ENCODE measurements at regions of chr11 and their contacts with region 1.

Region 1: GRCh38 chr11:59283825-59284772 is 71.4 kb upstream of the MPEG1 start:
- DNase-seq: peak; percentile 37 to 62
- H3K4me3 ChIP-seq: no peak overlapping the region
- H3K27ac ChIP-seq: no peak overlapping the region
- H3K4me1 ChIP-seq: no peaks in the 10 kb centered on the region
- H3K27me3 ChIP-seq: no peaks in the 10 kb centered on the region
- CTCF ChIP-seq: peak; percentile 87

Region 2: GRCh38 chr11:59207988-59208451 is 76.1 kb before region 1 on chr11:
- CTCF ChIA-PET with region 1: no interaction called
- POLR2A ChIA-PET with region 1: no interaction called
- intact Hi-C with region 1: loop called (anchors 1 kb)
- DNase-seq: peak; percentile 26 to 62
- H3K4me3 ChIP-seq: no peak overlapping the region
- H3K27ac ChIP-seq: no peak overlapping the region
- H3K4me1 ChIP-seq: no peaks in the 10 kb centered on the region
- H3K27me3 ChIP-seq: no peaks in the 10 kb centered on the region
- CTCF ChIP-seq: peak; percentile 85

Region 3: GRCh38 chr11:59263225-59263894 is 20.7 kb before region 1 on chr11:
- CTCF ChIA-PET with region 1: no interaction called
- POLR2A ChIA-PET with region 1: interaction called, 18 read pairs
- intact Hi-C with region 1: loop called (anchors 1 kb)
- DNase-seq: peak in 1 of 2 experiments; percentile 52
- H3K4me3 ChIP-seq: no peak overlapping the region
- H3K27ac ChIP-seq: no peak overlapping the region
- H3K4me1 ChIP-seq: peaks cover 29% of the 10 kb centered on the region
- H3K27me3 ChIP-seq: no peaks in the 10 kb centered on the region
- CTCF ChIP-seq: peak; percentile 73

Measured in PC-9 (cell line).